HCT116 (cell line): ENCODE measurements at regions of chr6 and their contacts with region 1.

Region 1: DNA sequence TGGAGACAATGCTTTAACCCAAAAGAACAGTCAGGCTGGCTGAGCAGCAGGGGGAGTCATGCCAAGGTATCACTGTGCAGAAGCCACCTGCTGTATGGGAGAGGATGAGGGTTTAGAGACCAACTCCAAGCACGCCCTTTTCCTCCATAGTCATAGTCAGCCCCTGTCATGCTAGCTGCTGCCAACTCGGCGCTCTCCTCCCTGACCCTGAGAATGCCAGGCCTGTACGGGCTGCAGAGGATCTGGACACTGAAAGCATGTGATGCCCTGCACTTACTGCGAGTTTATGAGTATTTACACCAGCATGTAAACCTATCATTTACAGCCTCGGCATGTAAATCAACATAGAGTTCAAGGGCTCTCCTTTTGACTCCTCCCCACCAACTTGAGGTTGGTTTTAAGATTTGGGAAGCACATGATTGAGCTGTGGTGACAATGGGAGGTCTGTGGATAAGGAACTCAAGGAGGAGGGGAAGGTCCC is 11.7 kb upstream of the SCUBE3 start:
- DNase-seq: no peak
- ATAC-seq: no peak
- H3K4me3 ChIP-seq: no peak overlapping the region
- H3K27ac ChIP-seq: no peak overlapping the region
- H3K4me1 ChIP-seq: no peaks in the 10 kb centered on the region; a peak in 1 of 4 replicates
- H3K27me3 ChIP-seq: peaks cover 13% of the 10 kb centered on the region; the same call in 1 of the 2 replicates
- CTCF ChIP-seq: no peak
- POLR2A ChIP-seq: no peak
- RAD21 ChIP-seq: no peak

Region 2: DNA sequence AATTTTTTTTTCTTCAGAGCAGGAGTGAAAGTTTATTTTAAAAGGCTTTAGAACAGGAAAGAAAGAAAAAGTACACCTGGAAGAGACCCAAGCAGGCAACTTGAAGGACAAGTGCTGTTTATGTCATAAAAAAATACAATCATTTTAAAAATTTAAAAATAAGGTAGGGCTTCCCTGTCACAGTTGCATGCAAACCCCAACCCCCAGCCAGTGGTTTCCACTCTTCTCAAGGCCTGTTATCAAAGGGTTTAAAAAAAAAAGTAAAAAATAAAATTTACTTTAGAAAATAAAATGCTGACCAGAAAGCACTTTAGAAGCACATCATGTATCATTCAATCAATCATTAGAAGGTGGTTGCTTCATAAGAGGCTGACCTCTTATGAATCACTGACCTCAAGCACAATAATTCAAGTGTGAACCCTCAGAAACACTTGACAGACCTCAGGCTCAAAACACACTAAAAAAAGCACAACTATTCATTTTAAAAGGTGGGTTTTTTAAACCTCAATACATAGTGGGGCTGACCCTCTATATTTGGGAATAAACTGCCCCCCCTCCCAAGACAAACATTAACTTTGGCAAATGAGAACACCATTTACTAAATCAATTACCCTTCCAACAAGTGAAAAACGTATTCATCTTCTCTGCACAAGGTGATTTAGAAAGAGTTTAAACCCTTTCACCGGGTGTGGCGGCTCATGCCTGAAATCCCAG is 521.1 kb before region 1 on chr6:
- CTCF ChIA-PET with region 1: no interaction called
- POLR2A ChIA-PET with region 1: no interaction called
- RAD21 ChIA-PET with region 1: no interaction called
- intact Hi-C with region 1: no loop called
- DNase-seq: peak; percentile 27
- ATAC-seq: peak; percentile 69
- H3K4me3 ChIP-seq: no peak overlapping the region
- H3K27ac ChIP-seq: peak overlapping the region; percentile 58; the same call in 1 of the 2 replicates
- H3K4me1 ChIP-seq: peaks cover 23 to 28% of the 10 kb centered on the region in 2 experiments
- H3K27me3 ChIP-seq: no peaks in the 10 kb centered on the region
- CTCF ChIP-seq: no peak
- POLR2A ChIP-seq: no peak
- RAD21 ChIP-seq: no peak

Region 3: GRCh38 chr6:34922177-34922663 is 279.9 kb before region 1 on chr6:
- CTCF ChIA-PET with region 1: no interaction called
- POLR2A ChIA-PET with region 1: no interaction called
- RAD21 ChIA-PET with region 1: no interaction called
- intact Hi-C with region 1: no loop called
- DNase-seq: no peak
- ATAC-seq: peak; percentile 65
- H3K4me3 ChIP-seq: no peak overlapping the region
- H3K27ac ChIP-seq: no peak overlapping the region
- H3K4me1 ChIP-seq: peaks cover 0 to 22% of the 10 kb centered on the region in 2 experiments; a peak in 2 of 4 replicates
- H3K27me3 ChIP-seq: no peaks in the 10 kb centered on the region
- CTCF ChIP-seq: no peak
- POLR2A ChIP-seq: no peak
- RAD21 ChIP-seq: no peak

Region 4: GRCh38 chr6:35146453-35146852 is 55.7 kb before region 1 on chr6:
- CTCF ChIA-PET with region 1: interaction called, 36 read pairs
- POLR2A ChIA-PET with region 1: no interaction called
- RAD21 ChIA-PET with region 1: interaction called, 4 to 7 read pairs
- intact Hi-C with region 1: loop called (anchors 1 kb)
- DNase-seq: peak; percentile 23
- ATAC-seq: peak; percentile 90
- H3K4me3 ChIP-seq: no peak overlapping the region
- H3K27ac ChIP-seq: no peak overlapping the region
- H3K4me1 ChIP-seq: peaks cover 0 to 10% of the 10 kb centered on the region in 2 experiments; a peak in 2 of 4 replicates
- H3K27me3 ChIP-seq: no peaks in the 10 kb centered on the region
- CTCF ChIP-seq: peak; percentile 69 to 89 (median 81)
- POLR2A ChIP-seq: no peak
- RAD21 ChIP-seq: peak; percentile 94

Region 5: DNA sequence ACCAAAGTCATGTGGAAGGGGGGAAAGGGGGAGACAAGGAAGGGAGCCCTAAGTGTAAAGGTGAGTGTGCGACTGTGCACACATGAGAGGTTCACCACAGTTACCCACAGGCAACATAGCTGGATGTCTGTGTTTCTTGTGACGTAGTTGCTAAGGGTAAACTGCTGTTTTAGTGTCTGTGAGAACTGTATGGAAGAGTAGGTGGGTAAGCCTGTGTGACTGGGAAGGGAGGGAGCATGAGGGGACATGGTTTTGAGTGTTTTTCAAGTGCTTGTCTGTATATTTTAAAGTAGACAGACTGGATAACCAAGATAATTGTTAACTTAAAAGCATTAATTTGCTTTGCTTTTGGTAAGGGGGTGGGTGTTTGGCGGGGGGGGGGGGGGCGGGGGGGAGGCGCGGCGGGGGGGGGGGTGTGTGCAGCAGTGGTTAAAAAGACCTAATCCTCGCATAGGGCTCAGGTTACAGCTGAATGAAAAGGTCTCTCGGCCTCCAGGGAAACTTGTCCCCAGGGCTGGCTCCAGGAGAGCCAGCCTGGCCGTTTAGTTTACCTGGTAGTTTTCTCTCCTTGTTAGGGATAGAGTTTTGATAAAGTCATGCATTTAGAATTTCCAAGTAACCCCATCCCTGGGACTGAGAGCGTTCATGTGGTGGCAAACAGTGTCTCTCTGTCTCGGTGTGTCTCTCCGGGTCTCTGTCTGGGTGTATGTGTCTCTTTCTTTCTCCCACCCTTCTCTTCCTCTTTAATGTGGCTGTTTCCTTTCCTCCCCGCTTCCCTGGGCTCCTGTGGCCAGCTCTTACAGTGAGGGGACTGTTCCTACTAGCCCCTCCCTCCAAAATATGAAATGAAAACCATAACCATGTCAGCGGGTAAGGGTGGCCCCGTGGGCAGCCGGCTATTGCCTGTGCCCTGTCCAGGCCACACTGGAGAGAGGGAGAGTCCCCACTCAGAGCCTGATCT is 15.0 kb after region 1 on chr6:
- CTCF ChIA-PET with region 1: interaction called, 13 read pairs
- POLR2A ChIA-PET with region 1: no interaction called
- RAD21 ChIA-PET with region 1: no interaction called
- intact Hi-C with region 1: no loop called
- DNase-seq: no peak
- ATAC-seq: no peak
- H3K4me3 ChIP-seq: no peak overlapping the region
- H3K27ac ChIP-seq: no peak overlapping the region
- H3K4me1 ChIP-seq: no peaks in the 10 kb centered on the region; a peak in 1 of 4 replicates
- H3K27me3 ChIP-seq: no peaks in the 10 kb centered on the region
- CTCF ChIP-seq: no peak
- POLR2A ChIP-seq: no peak
- RAD21 ChIP-seq: no peak